Vagina (tissue), 2 donors: ENCODE measurements at regions of chr5 and their contacts with region 1.

Region 1: GRCh38 chr5:160199410-160199911 is 29.8 kb upstream of the FABP6 start:
- DNase-seq: no peak
- H3K4me3 ChIP-seq: peak overlapping the region; percentile 46 to 48
- H3K27ac ChIP-seq: peak overlapping the region; percentile 44
- H3K4me1 ChIP-seq: peaks cover 5% of the 10 kb centered on the region
- H3K27me3 ChIP-seq: no peaks in the 10 kb centered on the region
- CTCF ChIP-seq: peak; percentile 90 to 95 (median 91)
- POLR2A ChIP-seq: no peak

Region 2: DNA sequence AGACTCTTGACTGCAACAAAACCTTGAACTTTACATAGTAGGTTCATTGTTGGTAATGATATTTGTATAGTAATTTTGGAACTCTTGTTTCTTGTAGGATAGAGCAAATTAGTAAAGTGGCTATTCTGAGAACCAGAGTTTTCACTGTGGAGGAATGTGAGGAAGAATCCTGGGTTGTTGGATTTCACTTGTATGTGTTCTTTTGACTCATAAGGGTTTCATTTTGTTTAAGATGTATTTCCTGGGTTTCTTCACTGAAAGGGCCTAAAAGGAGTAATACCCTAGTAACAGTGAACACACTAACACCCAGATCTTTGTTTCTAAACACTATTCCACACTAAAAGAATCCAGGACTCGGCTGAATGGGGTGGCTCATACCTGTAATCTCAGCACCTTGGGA is 170.5 kb before region 1 on chr5:
- intact Hi-C with region 1: loop called (anchors 5 kb)
- DNase-seq: no peak
- H3K4me3 ChIP-seq: no peak overlapping the region
- H3K27ac ChIP-seq: no peak overlapping the region
- H3K4me1 ChIP-seq: peaks cover 17% of the 10 kb centered on the region
- H3K27me3 ChIP-seq: no peaks in the 10 kb centered on the region
- CTCF ChIP-seq: no peak
- POLR2A ChIP-seq: no peak

Region 3: GRCh38 chr5:160342403-160342941 is 143.0 kb after region 1 on chr5:
- intact Hi-C with region 1: loop called (anchors 2 kb)
- DNase-seq: no peak
- H3K4me3 ChIP-seq: no peak overlapping the region
- H3K27ac ChIP-seq: peak overlapping the region; percentile 20
- H3K4me1 ChIP-seq: no peaks in the 10 kb centered on the region
- H3K27me3 ChIP-seq: no peaks in the 10 kb centered on the region
- CTCF ChIP-seq: no peak
- POLR2A ChIP-seq: no peak

Region 4: DNA sequence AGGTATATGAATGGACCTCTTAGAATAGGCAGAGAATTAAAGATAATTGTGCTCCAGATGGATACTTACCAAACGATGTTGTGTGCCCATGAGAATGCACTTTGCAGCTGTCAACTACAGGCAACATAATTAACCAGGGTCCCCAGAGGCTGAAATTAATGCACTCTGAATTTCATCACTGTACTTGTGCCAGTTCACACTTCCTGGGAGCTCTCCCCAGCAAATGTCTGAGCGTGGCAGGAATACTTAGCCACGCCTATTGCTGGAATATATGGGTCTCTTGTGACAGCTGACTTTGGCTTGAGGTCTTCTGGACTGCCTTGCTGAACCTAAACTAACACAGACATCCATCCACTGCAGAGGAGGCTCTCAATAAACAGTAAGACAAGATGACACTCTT is 182.9 kb after region 1 on chr5:
- intact Hi-C with region 1: loop called (anchors 10 kb)
- DNase-seq: no peak
- H3K4me3 ChIP-seq: no peak overlapping the region
- H3K27ac ChIP-seq: no peak overlapping the region
- H3K4me1 ChIP-seq: no peaks in the 10 kb centered on the region
- H3K27me3 ChIP-seq: no peaks in the 10 kb centered on the region
- CTCF ChIP-seq: no peak
- POLR2A ChIP-seq: no peak

Region 5: GRCh38 chr5:160743027-160743426 is 543.6 kb after region 1 on chr5:
- intact Hi-C with region 1: no loop called
- DNase-seq: no peak
- H3K4me3 ChIP-seq: no peak overlapping the region
- H3K27ac ChIP-seq: no peak overlapping the region
- H3K4me1 ChIP-seq: no peaks in the 10 kb centered on the region
- H3K27me3 ChIP-seq: no peaks in the 10 kb centered on the region
- CTCF ChIP-seq: no peak
- POLR2A ChIP-seq: no peak